ENCODE measurements at regions of chr3 and their contacts with region 1.

Region 1: DNA sequence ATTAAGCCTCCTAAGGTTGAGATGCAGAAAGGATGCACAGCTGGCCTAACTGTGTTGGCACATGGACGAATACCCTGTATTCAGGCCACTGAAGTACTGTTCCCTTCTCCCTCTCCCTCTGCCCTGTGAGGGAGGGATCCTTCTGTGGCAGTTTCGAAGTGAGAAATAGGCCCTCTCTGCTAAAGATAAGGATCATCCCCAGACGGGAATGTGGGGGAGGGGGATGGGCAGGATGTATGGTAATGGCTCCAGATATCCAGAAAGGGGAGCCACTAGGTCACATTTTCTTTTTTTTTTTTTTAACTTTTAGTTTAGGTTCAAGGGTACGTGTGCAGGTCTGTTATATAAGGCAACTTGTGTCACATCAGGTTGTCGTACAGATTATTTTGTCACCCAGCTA is 463.1 kb downstream of the TBL1XR1 start:
- DNase-seq: no peak
- ATAC-seq: no peak
- H3K4me3 ChIP-seq: no peak overlapping the region
- H3K4me3 Mint-ChIP-seq: no peak overlapping the region
- H3K27ac ChIP-seq: no peak overlapping the region
- H3K27ac Mint-ChIP-seq: no peak overlapping the region
- H3K4me1 ChIP-seq: no peaks in the 10 kb centered on the region
- H3K4me1 Mint-ChIP-seq: no peaks in the 10 kb centered on the region
- H3K27me3 ChIP-seq: no peaks in the 10 kb centered on the region
- H3K27me3 Mint-ChIP-seq: no peaks in the 10 kb centered on the region
- CTCF ChIP-seq: no peak

Region 2: DNA sequence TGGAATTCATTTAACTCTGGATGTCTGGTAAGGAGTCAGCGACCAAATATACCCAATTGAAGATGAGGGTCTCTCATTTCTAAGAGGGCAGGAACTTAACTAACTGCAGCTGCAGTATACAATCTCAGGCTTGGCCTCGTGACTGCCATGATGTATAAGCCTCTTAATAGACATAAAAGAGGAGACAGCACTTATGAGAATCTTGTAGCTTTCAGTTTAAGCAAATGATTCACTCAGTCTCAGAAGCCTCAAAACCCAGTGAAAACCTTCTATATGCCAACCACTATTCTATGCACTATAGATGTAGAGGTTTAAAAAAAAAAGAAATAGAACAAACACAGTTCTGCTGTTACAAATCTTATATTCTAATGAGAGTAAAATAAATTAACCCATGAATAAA is 50.8 kb before region 1 on chr3:
- CTCF ChIA-PET with region 1: no interaction called
- POLR2A ChIA-PET with region 1: no interaction called
- intact Hi-C with region 1: loop called in 1 of 2 experiments (anchors 2 kb)
- DNase-seq: no peak
- ATAC-seq: no peak
- H3K4me3 ChIP-seq: no peak overlapping the region
- H3K4me3 Mint-ChIP-seq: no peak overlapping the region
- H3K27ac ChIP-seq: no peak overlapping the region
- H3K27ac Mint-ChIP-seq: no peak overlapping the region
- H3K4me1 ChIP-seq: no peaks in the 10 kb centered on the region
- H3K4me1 Mint-ChIP-seq: no peaks in the 10 kb centered on the region
- H3K27me3 ChIP-seq: no peaks in the 10 kb centered on the region
- H3K27me3 Mint-ChIP-seq: no peaks in the 10 kb centered on the region
- CTCF ChIP-seq: no peak